ENCODE measurements at regions of chr22 and their contacts with region 1.

Region 1: DNA sequence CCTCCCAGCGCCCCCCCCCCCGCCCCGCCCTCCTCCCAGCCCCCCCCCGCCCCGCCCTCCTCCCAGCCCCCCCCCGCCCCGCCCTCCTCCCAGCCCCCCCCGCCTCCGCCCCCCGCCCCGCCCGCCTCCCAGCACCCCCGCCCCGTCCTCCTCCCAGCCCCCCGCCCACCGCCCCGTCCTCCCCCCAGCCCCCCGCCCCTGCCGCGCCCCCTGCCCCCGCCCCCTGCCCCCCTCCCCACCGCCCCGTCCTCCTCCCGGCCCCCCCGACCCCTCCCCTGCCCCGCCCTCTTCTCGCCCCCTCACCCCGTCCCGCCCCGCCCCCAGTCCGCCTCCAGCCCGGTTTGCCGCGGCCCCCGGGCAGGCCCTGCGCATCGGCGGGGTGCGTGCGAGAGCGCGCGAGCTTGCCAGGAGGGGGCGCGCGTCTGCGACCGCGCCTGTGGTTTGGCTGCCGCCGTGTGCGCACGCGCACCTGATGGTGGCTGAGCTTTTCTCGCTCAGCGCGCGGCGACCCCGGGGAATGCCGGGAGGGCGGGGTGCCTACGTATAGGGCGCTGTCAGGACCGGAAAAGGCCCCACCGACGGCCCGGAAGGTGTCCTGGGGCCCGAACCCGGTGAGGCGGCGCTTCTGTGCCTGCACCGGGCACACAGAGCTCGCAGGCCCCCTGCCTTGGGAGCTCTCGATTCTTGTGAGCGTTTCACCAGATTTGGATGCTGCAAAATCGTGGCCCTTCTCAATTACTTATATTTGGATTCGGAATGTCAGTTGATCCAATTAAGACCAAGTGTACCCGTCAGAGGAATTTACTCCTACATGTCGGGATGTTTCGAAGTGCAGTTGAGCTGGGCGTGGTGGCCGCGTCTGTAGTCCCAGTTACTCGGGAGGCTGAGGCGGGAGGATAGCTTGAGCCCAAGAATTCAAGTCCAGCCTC is 501 bp upstream of the TTLL12 start:
- DNase-seq: peak; percentile 87 to 96
- H3K4me3 ChIP-seq: peak overlapping the region; percentile 34 to 62 (median 40); a peak in 7 of 8 replicates
- H3K27ac ChIP-seq: peak overlapping the region; percentile 53; the same call in 1 of the 2 replicates
- H3K4me1 ChIP-seq: peaks cover 0 to 14% (median 5%) of the 10 kb centered on the region in 4 experiments; a peak in 4 of 7 replicates
- H3K27me3 ChIP-seq: no peaks in the 10 kb centered on the region; a peak in 1 of 7 replicates
- CTCF ChIP-seq: peak; percentile 59 to 64 (median 60)
- EP300 ChIP-seq: peak in 1 of 2 experiments; percentile 5; a peak in 1 of 3 replicates
- POLR2A ChIP-seq: peak; percentile 26 to 68
- RAD21 ChIP-seq: peak; percentile 22 to 35; a peak in 3 of 4 replicates

Region 2: GRCh38 chr22:43203471-43203981 is 16.1 kb after region 1 on chr22:
- CTCF ChIA-PET with region 1: interaction called, 42 read pairs
- POLR2A ChIA-PET with region 1: interaction called, 14 read pairs
- DNase-seq: peak; percentile 70 to 82
- H3K4me3 ChIP-seq: peak overlapping the region in 1 of 4 experiments; percentile 37; a peak in 1 of 8 replicates
- H3K27ac ChIP-seq: no peak overlapping the region
- H3K4me1 ChIP-seq: peaks cover 2 to 11% (median 4%) of the 10 kb centered on the region in 4 experiments; a peak in 6 of 7 replicates
- H3K27me3 ChIP-seq: no peaks in the 10 kb centered on the region
- CTCF ChIP-seq: peak; percentile 64 to 79 (median 77)
- EP300 ChIP-seq: no peak
- POLR2A ChIP-seq: no peak
- RAD21 ChIP-seq: peak; percentile 54 to 63

Region 3: DNA sequence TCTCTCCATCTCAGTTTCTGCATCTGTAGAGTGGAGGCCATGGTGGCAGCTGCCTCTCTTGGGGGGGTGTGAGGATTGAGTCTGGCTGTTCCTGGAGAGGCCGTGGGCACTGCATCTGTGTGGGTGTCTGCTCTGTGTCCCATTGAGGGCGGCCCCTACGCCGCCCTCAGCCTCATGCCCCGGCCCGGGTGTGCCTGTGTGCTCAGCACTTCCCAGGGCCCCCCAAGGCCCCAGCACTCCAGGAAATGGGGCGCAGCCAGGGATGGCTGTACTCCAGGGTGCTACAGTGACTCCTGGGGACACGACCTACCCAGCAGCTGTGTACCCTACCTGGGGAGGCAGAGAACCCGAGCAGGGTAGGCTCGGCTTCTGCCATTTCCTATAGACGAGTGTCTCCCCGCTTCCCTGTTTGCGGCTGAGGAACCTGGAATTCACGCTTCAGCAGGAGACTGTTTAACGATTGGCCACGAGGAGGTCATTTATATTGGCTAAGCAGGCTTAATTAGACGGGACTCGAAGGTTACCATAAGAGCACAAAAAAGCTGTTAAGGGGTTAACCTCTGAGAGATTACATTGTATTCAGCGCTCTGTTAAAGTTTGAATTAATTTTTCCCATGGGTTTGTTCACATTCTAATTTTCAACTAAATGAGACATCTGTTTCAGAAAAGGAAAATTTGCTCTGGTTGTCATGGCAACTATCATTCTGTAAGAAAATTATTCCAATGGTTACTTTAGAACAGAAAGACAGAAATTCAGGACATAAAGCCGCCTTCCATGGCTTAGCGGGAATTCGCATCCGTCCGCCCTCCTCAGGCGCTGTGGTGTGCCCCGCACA is 300.8 kb after region 1 on chr22:
- CTCF ChIA-PET with region 1: no interaction called
- POLR2A ChIA-PET with region 1: no interaction called
- DNase-seq: no peak
- H3K4me3 ChIP-seq: no peak overlapping the region
- H3K27ac ChIP-seq: no peak overlapping the region
- H3K4me1 ChIP-seq: no peaks in the 10 kb centered on the region; a peak in 1 of 7 replicates
- H3K27me3 ChIP-seq: no peaks in the 10 kb centered on the region
- CTCF ChIP-seq: no peak
- EP300 ChIP-seq: no peak
- POLR2A ChIP-seq: no peak
- RAD21 ChIP-seq: no peak